Activated B cell treated with CpG ODN at 0.5 μM for 24 hours (primary cell): ENCODE measurements at regions of chr2 and their contacts with region 1.

Region 1: GRCh38 chr2:37832590-37833197 is 92.4 kb upstream of the RMDN2 start:
- DNase-seq: peak; percentile 61
- ATAC-seq: peak; percentile 96
- H3K4me3 Mint-ChIP-seq: no peak overlapping the region
- H3K27ac Mint-ChIP-seq: no peak overlapping the region
- H3K4me1 Mint-ChIP-seq: peaks cover 1% of the 10 kb centered on the region
- H3K27me3 Mint-ChIP-seq: no peaks in the 10 kb centered on the region
- CTCF ChIP-seq: peak; percentile 55

Region 2: DNA sequence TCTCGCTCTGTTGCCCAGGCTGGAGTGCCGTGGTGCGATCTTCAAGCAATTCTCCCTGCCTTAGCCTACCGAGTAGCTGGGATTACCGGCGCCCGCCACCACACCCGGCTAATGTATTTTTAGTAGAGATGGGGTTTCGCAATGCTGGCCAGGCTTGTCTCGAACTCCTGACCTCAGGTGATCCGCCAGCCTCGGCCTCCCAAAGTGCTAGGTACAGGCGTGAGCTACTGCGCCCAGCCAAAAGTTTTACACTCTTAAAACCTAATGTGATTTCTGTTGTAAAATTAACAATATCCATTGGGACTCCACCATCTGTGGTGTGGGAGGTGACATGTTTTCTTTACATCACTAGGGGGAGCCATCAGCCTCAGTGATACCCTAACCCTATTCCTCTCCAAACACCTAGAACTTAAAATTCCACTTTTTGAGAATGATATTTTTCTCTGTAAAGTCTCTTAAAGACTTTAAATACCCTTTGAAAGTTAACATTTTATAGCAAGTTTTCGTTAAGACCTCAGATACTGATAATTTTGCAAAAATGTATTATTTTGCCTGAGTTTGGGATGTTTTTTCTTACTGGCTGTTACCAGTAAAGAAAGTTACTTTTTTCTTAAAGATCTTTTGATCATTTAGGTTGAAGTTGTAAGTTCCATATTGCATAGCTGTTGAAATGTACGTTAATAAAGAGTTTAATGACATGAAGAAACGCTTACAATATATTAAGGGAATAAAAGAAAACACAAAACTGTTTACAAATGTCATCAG is 664.3 kb before region 1 on chr2:
- CTCF ChIA-PET with region 1: interaction called, 10 read pairs
- POLR2A ChIA-PET with region 1: no interaction called
- intact Hi-C with region 1: loop called (anchors 1 kb)
- DNase-seq: no peak
- ATAC-seq: peak; percentile 86
- H3K4me3 Mint-ChIP-seq: no peak overlapping the region
- H3K27ac Mint-ChIP-seq: no peak overlapping the region
- H3K4me1 Mint-ChIP-seq: no peaks in the 10 kb centered on the region
- H3K27me3 Mint-ChIP-seq: no peaks in the 10 kb centered on the region
- CTCF ChIP-seq: no peak

Region 3: DNA sequence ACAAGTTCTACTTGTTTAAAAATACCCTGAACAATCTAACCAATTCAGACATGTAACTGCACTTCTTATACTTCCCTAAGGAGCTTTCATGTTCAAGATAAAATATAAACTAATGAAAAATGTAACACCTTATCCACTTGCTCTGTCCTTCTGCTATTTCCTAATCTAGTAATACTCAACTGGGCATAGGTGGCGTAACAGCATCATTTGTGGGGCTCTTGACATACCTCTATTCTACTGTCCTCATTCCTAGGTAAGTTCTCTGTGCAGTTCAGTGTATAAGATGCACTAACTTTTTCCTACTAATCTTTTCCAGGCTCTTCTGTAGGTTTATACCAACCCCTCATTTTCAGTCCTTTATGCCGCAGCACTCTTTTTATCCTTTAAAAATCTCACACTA is 544.7 kb before region 1 on chr2:
- CTCF ChIA-PET with region 1: interaction called, 9 read pairs
- POLR2A ChIA-PET with region 1: no interaction called
- intact Hi-C with region 1: loop called (anchors 1 kb)
- DNase-seq: no peak
- ATAC-seq: no peak
- H3K4me3 Mint-ChIP-seq: no peak overlapping the region
- H3K27ac Mint-ChIP-seq: no peak overlapping the region
- H3K4me1 Mint-ChIP-seq: peaks cover 13% of the 10 kb centered on the region
- H3K27me3 Mint-ChIP-seq: no peaks in the 10 kb centered on the region
- CTCF ChIP-seq: no peak

Region 4: DNA sequence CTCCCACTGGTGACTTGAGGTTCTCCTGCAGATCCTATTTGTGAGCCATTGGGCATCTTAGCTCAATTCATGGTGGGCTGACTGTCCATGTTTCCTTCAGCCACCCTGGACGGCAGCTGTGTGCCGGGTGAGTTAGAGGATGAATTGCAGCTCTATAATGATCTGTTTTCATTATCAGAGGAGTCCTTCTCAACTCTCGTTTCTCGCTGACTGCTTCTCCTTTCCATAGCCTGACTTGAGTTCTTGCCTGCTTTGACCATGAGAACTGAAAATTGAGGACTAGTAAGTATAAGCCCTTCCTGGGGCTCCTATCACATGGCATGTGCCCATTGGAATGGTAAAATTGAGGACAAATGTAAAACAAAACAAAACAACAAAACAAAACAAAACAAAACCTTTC is 283.1 kb before region 1 on chr2:
- CTCF ChIA-PET with region 1: interaction called, 17 read pairs
- POLR2A ChIA-PET with region 1: no interaction called
- intact Hi-C with region 1: loop called (anchors 1 kb)
- DNase-seq: no peak
- ATAC-seq: no peak
- H3K4me3 Mint-ChIP-seq: no peak overlapping the region
- H3K27ac Mint-ChIP-seq: no peak overlapping the region
- H3K4me1 Mint-ChIP-seq: peaks cover 41% of the 10 kb centered on the region
- H3K27me3 Mint-ChIP-seq: no peaks in the 10 kb centered on the region
- CTCF ChIP-seq: no peak

Region 5: GRCh38 chr2:37672104-37672869 is 160.4 kb before region 1 on chr2:
- CTCF ChIA-PET with region 1: interaction called, 6 read pairs
- POLR2A ChIA-PET with region 1: no interaction called
- intact Hi-C with region 1: loop called (anchors 2 kb)
- DNase-seq: peak; percentile 68
- ATAC-seq: peak; percentile 54
- H3K4me3 Mint-ChIP-seq: peak overlapping the region; percentile 90
- H3K27ac Mint-ChIP-seq: peak overlapping the region; percentile 84
- H3K4me1 Mint-ChIP-seq: peaks cover 50% of the 10 kb centered on the region
- H3K27me3 Mint-ChIP-seq: no peaks in the 10 kb centered on the region
- CTCF ChIP-seq: no peak

Region 6: GRCh38 chr2:37877457-37878315 is 45.0 kb after region 1 on chr2:
- CTCF ChIA-PET with region 1: interaction called, 18 read pairs
- POLR2A ChIA-PET with region 1: no interaction called
- intact Hi-C with region 1: loop called (anchors 1 kb)
- DNase-seq: no peak
- ATAC-seq: peak; percentile 57
- H3K4me3 Mint-ChIP-seq: no peak overlapping the region
- H3K27ac Mint-ChIP-seq: no peak overlapping the region
- H3K4me1 Mint-ChIP-seq: peaks cover 3% of the 10 kb centered on the region
- H3K27me3 Mint-ChIP-seq: peaks cover 21% of the 10 kb centered on the region
- CTCF ChIP-seq: peak; percentile 76

Region 7: DNA sequence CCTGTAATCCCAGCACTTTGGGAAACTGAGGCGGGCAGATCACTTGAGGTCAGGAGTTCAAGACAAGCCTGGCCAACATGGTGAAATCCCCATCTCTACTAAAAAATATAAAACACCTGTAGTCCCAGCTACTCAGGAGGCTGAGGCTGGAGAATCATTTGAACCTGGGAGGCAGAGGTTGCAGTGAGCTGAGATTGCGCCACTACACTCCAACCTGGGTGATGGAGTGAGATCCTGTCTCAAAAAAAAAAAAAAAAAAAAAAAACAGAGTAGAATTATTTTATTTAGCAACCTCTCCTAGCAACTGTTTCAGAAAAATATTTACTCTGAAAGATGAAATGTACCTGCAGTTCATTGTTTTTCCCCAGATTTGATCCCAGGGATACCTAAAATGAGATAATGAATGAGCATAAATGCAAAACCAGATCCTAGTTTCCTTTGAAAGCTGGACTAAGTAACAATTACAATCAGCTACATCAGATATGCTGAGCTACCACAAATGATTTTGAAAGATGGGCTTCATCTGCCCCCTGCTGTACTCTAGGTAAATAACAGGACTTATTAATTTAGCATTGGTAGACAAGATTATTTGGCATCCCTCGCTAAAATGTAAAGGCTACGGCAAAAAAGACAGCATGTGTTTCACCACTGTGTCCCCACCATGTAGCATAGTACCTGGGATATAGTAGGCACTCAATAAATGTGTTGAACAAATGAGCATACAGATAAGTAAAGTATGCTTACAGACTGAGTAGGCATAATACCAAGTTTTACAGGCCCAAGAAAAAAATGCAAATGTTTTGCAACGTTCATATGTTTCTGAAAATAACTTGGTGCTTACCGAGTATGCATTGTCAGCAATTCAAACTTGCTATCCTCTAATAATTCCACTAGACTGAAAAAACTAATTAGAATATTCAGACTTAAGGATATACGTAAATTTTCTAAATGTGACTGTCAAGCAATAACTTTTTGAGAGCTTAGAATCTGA is 441.9 kb after region 1 on chr2:
- CTCF ChIA-PET with region 1: interaction called, 4 read pairs
- POLR2A ChIA-PET with region 1: no interaction called
- intact Hi-C with region 1: loop called (anchors 1 kb)
- DNase-seq: no peak
- ATAC-seq: peak; percentile 56
- H3K4me3 Mint-ChIP-seq: no peak overlapping the region
- H3K27ac Mint-ChIP-seq: no peak overlapping the region
- H3K4me1 Mint-ChIP-seq: peaks cover 3% of the 10 kb centered on the region
- H3K27me3 Mint-ChIP-seq: no peaks in the 10 kb centered on the region
- CTCF ChIP-seq: no peak